ENCODE measurements at regions of chr7 and their contacts with region 1.

Region 1: GRCh38 chr7:73851410-73852234 is 9.3 kb upstream of the METTL27 start:
- DNase-seq: peak; percentile 53
- ATAC-seq: peak; percentile 85
- H3K4me3 Mint-ChIP-seq: no peak overlapping the region
- H3K27ac Mint-ChIP-seq: peak overlapping the region; percentile 49
- H3K4me1 Mint-ChIP-seq: peaks cover 33% of the 10 kb centered on the region
- H3K27me3 Mint-ChIP-seq: peaks cover 26% of the 10 kb centered on the region

Region 2: GRCh38 chr7:73683965-73684693 is 167.5 kb before region 1 on chr7:
- CTCF ChIA-PET with region 1: no interaction called
- DNase-seq: no peak
- ATAC-seq: peak; percentile 1
- H3K4me3 Mint-ChIP-seq: peak overlapping the region; percentile 95
- H3K27ac Mint-ChIP-seq: peak overlapping the region; percentile 96
- H3K4me1 Mint-ChIP-seq: peaks cover 46% of the 10 kb centered on the region
- H3K27me3 Mint-ChIP-seq: no peaks in the 10 kb centered on the region

Region 3: GRCh38 chr7:73701357-73701995 is 150.1 kb before region 1 on chr7:
- CTCF ChIA-PET with region 1: no interaction called
- DNase-seq: no peak
- ATAC-seq: no peak
- H3K4me3 Mint-ChIP-seq: no peak overlapping the region
- H3K27ac Mint-ChIP-seq: no peak overlapping the region
- H3K4me1 Mint-ChIP-seq: peaks cover 5% of the 10 kb centered on the region
- H3K27me3 Mint-ChIP-seq: no peaks in the 10 kb centered on the region

Region 4: DNA sequence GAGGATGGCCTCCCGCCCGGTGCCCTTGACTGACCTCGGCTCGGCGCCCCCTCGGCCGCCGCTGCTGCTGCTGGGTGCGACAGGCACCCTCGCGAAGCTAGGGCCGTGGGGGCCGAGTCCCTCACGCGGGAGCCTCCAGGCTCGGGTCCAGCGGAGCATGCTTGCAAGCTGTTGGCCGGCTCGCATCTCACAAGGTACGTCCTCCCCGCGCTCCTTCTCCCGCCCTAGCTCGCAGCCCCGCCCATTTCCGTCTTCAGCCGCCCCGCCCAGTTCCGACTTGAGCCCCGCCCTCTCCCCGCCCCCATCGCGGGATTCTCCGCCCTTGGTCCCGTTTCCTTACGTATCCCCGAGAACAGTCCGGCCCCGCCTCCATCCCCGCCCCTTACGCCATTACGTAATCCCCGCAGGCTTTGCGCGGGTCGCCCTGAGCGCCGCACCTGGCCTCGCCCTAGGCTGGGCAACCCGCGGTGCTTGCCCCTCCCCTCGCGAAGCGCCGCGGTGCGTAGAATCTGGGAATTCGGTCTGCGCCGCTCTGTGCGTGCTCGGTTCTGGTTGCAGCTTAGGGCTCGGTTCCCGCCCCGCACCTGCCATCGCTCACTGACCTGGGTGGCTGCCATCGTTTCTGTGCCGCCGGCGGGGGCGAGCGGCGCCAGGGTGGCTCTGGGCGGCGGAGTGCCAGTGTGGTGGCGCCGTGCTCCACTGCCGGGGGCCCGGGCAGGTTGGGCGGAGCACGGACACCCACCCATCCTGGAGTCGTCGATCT is 112.8 kb before region 1 on chr7 and contains the start of gene ABHD11:
- CTCF ChIA-PET with region 1: interaction called, 10 read pairs
- DNase-seq: peak; percentile 98
- ATAC-seq: peak; percentile 83
- H3K4me3 Mint-ChIP-seq: peak within 1 kb of the TSS; percentile 84
- H3K27ac Mint-ChIP-seq: peak within 1 kb of the TSS; percentile 95
- H3K4me1 Mint-ChIP-seq: peaks cover 21% of the 10 kb centered on the region
- H3K27me3 Mint-ChIP-seq: no peaks in the 10 kb centered on the region
- total RNA-seq, gene ABHD11: 15.9 to 19.2 TPM

Region 5: DNA sequence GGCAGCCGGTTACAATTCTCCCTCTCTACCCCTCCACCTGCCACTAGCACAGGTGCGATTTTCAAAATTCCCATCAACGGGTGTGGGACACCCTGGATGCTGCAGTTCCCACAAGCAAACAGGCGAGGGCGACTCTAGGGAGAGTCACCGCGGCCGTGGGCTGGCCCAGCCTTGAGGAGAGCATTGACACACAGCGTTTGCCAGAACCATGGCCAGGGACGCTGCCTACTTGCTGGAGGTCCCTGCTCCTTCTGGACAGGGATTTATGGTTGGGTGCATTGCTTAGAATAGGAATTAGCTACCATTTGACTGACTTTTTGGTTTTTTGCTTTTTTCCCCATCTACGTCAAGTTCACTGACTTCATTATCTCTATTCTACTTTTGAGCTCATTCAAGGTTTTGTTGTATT is 39.9 kb before region 1 on chr7:
- CTCF ChIA-PET with region 1: interaction called, 21 read pairs
- DNase-seq: peak; percentile 62
- ATAC-seq: peak; percentile 78
- H3K4me3 Mint-ChIP-seq: no peak overlapping the region
- H3K27ac Mint-ChIP-seq: no peak overlapping the region
- H3K4me1 Mint-ChIP-seq: no peaks in the 10 kb centered on the region
- H3K27me3 Mint-ChIP-seq: peaks cover 3% of the 10 kb centered on the region

Region 6: DNA sequence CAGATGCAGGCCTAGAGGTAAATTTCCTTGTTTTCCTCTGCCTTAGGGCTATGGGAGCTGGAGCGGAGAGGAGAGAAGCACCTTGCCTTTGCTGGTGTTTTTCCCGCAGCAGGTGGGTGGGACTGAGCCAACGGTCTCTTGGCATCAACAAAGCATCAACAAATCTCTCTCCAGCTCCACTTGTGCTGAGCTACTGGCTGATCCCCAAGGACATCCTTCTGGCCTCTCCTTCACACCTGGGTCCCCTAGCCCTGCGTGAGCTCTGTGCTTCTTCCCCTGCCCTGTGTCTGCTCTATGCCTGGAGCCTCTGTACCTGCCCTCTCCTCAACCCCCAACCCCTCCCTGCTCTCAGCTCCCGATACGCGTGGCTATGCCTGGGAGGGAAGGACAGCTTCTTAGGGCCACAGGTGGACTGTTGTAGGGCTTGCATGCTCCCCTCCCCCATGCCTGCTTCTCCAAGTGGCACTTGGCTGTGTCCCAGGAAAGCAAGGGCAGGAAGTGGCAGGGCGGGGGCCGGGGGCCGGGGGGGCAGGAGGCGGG is 24.0 kb before region 1 on chr7:
- CTCF ChIA-PET with region 1: interaction called, 11 read pairs
- DNase-seq: no peak
- ATAC-seq: no peak
- H3K4me3 Mint-ChIP-seq: no peak overlapping the region
- H3K27ac Mint-ChIP-seq: no peak overlapping the region
- H3K4me1 Mint-ChIP-seq: peaks cover 26% of the 10 kb centered on the region
- H3K27me3 Mint-ChIP-seq: peaks cover 21% of the 10 kb centered on the region

Region 7: GRCh38 chr7:73960548-73960947 is 108.9 kb after region 1 on chr7:
- CTCF ChIA-PET with region 1: no interaction called
- DNase-seq: no peak
- ATAC-seq: no peak
- H3K4me3 Mint-ChIP-seq: no peak overlapping the region
- H3K27ac Mint-ChIP-seq: no peak overlapping the region
- H3K4me1 Mint-ChIP-seq: no peaks in the 10 kb centered on the region
- H3K27me3 Mint-ChIP-seq: peaks cover 22% of the 10 kb centered on the region

Measured in activated CD8-positive, alpha-beta memory T cell treated with anti-CD3 and anti-CD28 coated beads, Interleukin-2, amount 10 ng/mL, durations not matched to agents 7 days and 5 days (primary cell).